CD8-positive, alpha-beta T cell (primary cell): ENCODE measurements at regions of chr15 and their contacts with region 1.

Region 1: GRCh38 chr15:77118882-77119321 is 48.0 kb upstream of the TSPAN3 start:
- DNase-seq: peak in 6 of 9 experiments; percentile 18 to 78 (median 32)
- ATAC-seq: peak; percentile 55
- H3K4me3 ChIP-seq: no peak overlapping the region
- H3K4me3 Mint-ChIP-seq: no peak overlapping the region
- H3K27ac ChIP-seq: no peak overlapping the region
- H3K27ac Mint-ChIP-seq: no peak overlapping the region
- H3K4me1 ChIP-seq: peaks cover 3% of the 10 kb centered on the region
- H3K4me1 Mint-ChIP-seq: peaks cover 7% of the 10 kb centered on the region
- H3K27me3 ChIP-seq: no peaks in the 10 kb centered on the region
- H3K27me3 Mint-ChIP-seq: no peaks in the 10 kb centered on the region
- CTCF ChIP-seq: peak; percentile 71

Region 2: DNA sequence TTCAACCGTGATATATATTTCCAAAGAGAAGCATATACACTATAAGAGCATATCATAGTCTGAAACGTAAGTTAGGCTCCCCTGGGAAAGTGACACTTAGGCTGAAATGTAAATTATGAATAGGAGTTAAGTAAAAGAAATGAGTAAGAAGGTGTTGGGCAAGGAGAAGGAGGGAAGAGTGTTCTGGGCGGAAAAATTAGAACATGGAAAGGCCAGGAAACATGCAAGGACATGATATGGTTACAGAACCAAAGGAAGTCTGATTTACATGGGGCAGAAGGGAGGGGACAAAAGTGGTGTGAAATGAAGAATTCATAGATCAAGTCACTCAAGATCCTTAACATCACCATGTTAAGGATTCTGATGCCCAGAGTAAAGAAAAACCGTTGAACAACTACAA is 289.0 kb before region 1 on chr15:
- CTCF ChIA-PET with region 1: no interaction called
- POLR2A ChIA-PET with region 1: no interaction called
- intact Hi-C with region 1: no loop called
- DNase-seq: no peak
- ATAC-seq: no peak
- H3K4me3 ChIP-seq: no peak overlapping the region
- H3K4me3 Mint-ChIP-seq: no peak overlapping the region
- H3K27ac ChIP-seq: no peak overlapping the region
- H3K27ac Mint-ChIP-seq: no peak overlapping the region
- H3K4me1 ChIP-seq: no peaks in the 10 kb centered on the region
- H3K4me1 Mint-ChIP-seq: peaks cover 4% of the 10 kb centered on the region
- H3K27me3 ChIP-seq: no peaks in the 10 kb centered on the region
- H3K27me3 Mint-ChIP-seq: no peaks in the 10 kb centered on the region
- CTCF ChIP-seq: no peak

Region 3: DNA sequence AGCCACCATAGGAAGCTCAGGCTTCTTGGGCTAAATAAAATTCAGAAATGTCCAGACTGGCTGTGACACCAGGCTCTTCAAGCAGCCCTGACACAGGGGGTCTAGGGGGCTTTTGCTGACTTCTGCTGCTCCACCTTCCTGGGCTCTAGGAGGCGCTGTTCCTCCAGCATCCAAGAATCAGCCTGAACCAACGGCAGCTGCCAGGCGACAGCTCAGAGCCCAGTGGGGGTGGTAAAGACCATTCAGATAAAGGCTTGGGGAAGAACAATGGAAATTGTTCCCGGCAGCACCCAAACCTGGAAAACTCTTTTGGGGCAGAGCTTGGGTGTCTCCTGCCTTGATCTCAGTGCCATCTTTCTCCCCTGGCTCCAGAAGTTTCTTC is 145.5 kb before region 1 on chr15:
- CTCF ChIA-PET with region 1: interaction called, 20 read pairs
- POLR2A ChIA-PET with region 1: no interaction called
- intact Hi-C with region 1: loop called (anchors 1 to 5 kb)
- DNase-seq: peak; percentile 39 to 85 (median 75)
- ATAC-seq: peak; percentile 84
- H3K4me3 ChIP-seq: no peak overlapping the region
- H3K4me3 Mint-ChIP-seq: no peak overlapping the region
- H3K27ac ChIP-seq: no peak overlapping the region
- H3K27ac Mint-ChIP-seq: no peak overlapping the region
- H3K4me1 ChIP-seq: peaks cover 4% of the 10 kb centered on the region
- H3K4me1 Mint-ChIP-seq: peaks cover 14% of the 10 kb centered on the region
- H3K27me3 ChIP-seq: no peaks in the 10 kb centered on the region
- H3K27me3 Mint-ChIP-seq: no peaks in the 10 kb centered on the region
- CTCF ChIP-seq: peak; percentile 86

Region 4: GRCh38 chr15:77179541-77179998 is 60.7 kb after region 1 on chr15:
- CTCF ChIA-PET with region 1: interaction called, 6 read pairs
- POLR2A ChIA-PET with region 1: no interaction called
- intact Hi-C with region 1: loop called in 1 of 2 experiments (anchors 5 kb)
- DNase-seq: peak in 2 of 9 experiments; percentile 31 to 62
- ATAC-seq: peak; percentile 59
- H3K4me3 ChIP-seq: peak overlapping the region; percentile 12 to 15
- H3K4me3 Mint-ChIP-seq: peak overlapping the region; percentile 60
- H3K27ac ChIP-seq: peak overlapping the region; percentile 40 to 78
- H3K27ac Mint-ChIP-seq: peak overlapping the region; percentile 89
- H3K4me1 ChIP-seq: peaks cover 40% of the 10 kb centered on the region
- H3K4me1 Mint-ChIP-seq: peaks cover 44% of the 10 kb centered on the region
- H3K27me3 ChIP-seq: no peaks in the 10 kb centered on the region
- H3K27me3 Mint-ChIP-seq: no peaks in the 10 kb centered on the region
- CTCF ChIP-seq: no peak

Region 5: GRCh38 chr15:77186594-77187011 is 67.7 kb after region 1 on chr15:
- CTCF ChIA-PET with region 1: interaction called, 10 read pairs
- POLR2A ChIA-PET with region 1: no interaction called
- intact Hi-C with region 1: loop called (anchors 5 kb)
- DNase-seq: peak in 3 of 9 experiments; percentile 26 to 63 (median 46)
- ATAC-seq: no peak
- H3K4me3 ChIP-seq: no peak overlapping the region
- H3K4me3 Mint-ChIP-seq: no peak overlapping the region
- H3K27ac ChIP-seq: no peak overlapping the region
- H3K27ac Mint-ChIP-seq: no peak overlapping the region
- H3K4me1 ChIP-seq: peaks cover 18% of the 10 kb centered on the region
- H3K4me1 Mint-ChIP-seq: peaks cover 41% of the 10 kb centered on the region
- H3K27me3 ChIP-seq: no peaks in the 10 kb centered on the region
- H3K27me3 Mint-ChIP-seq: no peaks in the 10 kb centered on the region
- CTCF ChIP-seq: peak; percentile 60

Region 6: DNA sequence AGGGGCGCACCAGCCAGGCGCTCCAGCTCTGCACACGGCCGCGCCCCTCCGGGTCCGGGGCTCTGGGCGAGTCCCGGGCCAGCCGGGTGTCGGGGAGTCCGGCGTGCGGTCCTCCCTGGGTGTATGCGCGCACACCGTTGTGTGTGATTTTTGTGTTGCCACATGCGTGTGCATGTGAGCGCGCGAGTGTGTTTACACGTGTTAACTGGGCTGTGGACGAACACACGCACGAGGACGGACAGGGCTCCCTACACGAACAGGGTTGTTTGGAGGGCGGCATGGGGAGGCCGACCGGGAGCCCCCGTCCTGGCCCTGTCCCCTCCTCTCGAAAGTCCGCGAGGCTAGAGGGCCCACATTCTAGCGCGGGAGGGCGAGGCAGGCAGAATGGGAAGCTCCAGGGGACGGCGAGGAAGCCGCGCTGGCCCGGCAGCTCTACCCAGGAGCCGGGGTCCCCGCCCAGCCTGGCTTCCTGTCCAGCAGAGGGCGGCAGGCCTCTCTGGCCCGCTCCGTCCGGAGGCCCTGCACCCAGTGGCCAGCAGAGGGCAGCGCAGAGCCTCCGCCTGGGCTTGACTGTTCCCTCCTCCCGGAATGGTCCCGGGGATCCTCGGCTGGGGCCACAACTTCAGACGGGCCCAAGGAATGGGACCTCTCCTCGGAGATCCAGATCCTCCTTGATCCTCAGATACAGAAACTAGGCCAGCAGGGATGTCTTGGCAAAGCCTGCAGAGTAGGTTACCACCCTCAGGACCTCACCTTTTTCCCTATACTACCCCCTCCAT is 514.4 kb after region 1 on chr15:
- CTCF ChIA-PET with region 1: interaction called, 3 read pairs
- POLR2A ChIA-PET with region 1: no interaction called
- intact Hi-C with region 1: loop called in 1 of 2 experiments (anchors 10 kb)
- DNase-seq: peak; percentile 12 to 67 (median 54)
- ATAC-seq: peak; percentile 49
- H3K4me3 ChIP-seq: peak overlapping the region; percentile 20 to 29
- H3K4me3 Mint-ChIP-seq: peak overlapping the region; percentile 67
- H3K27ac ChIP-seq: no peak overlapping the region
- H3K27ac Mint-ChIP-seq: no peak overlapping the region
- H3K4me1 ChIP-seq: peaks cover 10% of the 10 kb centered on the region
- H3K4me1 Mint-ChIP-seq: peaks cover 13% of the 10 kb centered on the region
- H3K27me3 ChIP-seq: peaks cover 17 to 18% of the 10 kb centered on the region in 2 experiments
- H3K27me3 Mint-ChIP-seq: peaks cover 48% of the 10 kb centered on the region
- CTCF ChIP-seq: peak; percentile 77

Region 7: GRCh38 chr15:77870195-77871065 is 751.5 kb after region 1 on chr15:
- CTCF ChIA-PET with region 1: no interaction called
- POLR2A ChIA-PET with region 1: no interaction called
- intact Hi-C with region 1: loop called in 1 of 2 experiments (anchors 10 kb)
- DNase-seq: peak in 4 of 9 experiments; percentile 25 to 44 (median 32)
- ATAC-seq: no peak
- H3K4me3 ChIP-seq: no peak overlapping the region
- H3K4me3 Mint-ChIP-seq: no peak overlapping the region
- H3K27ac ChIP-seq: no peak overlapping the region
- H3K27ac Mint-ChIP-seq: no peak overlapping the region
- H3K4me1 ChIP-seq: no peaks in the 10 kb centered on the region
- H3K4me1 Mint-ChIP-seq: no peaks in the 10 kb centered on the region
- H3K27me3 ChIP-seq: no peaks in the 10 kb centered on the region
- H3K27me3 Mint-ChIP-seq: no peaks in the 10 kb centered on the region
- CTCF ChIP-seq: peak; percentile 67